Right cardiac atrium (tissue), 5 donors: ENCODE measurements at regions of chr6 and their contacts with region 1.

Region 1: DNA sequence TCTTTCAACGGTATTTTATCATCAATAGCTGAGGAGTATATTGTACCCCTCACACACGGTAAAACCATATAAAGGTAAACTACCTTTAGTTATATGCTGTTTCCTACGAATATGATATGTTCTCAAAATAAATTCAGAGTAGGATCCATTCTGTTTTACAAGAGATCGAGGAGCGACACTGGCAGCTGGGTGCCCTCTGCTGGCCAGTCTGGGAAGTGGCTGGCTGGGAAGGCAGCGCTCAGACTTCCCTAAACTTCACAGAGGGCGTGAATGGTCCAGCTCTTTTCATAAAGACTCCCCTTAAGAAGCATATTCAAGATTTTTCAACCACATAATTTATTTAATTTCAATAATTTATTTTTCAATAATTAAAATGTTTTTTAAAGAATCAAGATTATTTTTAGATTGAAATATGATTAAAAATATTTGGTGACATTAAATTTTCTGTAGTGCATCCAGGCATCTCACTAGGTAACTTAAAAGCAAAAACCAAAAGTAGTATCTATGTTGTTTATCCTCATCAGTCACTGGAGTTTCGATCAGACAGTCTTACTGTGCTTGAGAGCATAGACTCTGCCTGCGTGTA is 187.5 kb upstream of the PDE10A start:
- DNase-seq: peak; percentile 71 to 89 (median 88)
- ATAC-seq: peak in 1 of 2 donors; percentile 65
- H3K4me3 ChIP-seq: no peak overlapping the region
- H3K27ac ChIP-seq: no peak overlapping the region
- H3K4me1 ChIP-seq: peaks cover 2% of the 10 kb centered on the region
- H3K27me3 ChIP-seq: no peaks in the 10 kb centered on the region

Region 2: GRCh38 chr6:165447141-165447540 is 403.4 kb before region 1 on chr6:
- intact Hi-C with region 1: loop called (anchors 2 to 10 kb)
- DNase-seq: no peak
- ATAC-seq: no peak
- H3K4me3 ChIP-seq: no peak overlapping the region
- H3K27ac ChIP-seq: no peak overlapping the region
- H3K4me1 ChIP-seq: no peaks in the 10 kb centered on the region
- H3K27me3 ChIP-seq: no peaks in the 10 kb centered on the region

Region 3: GRCh38 chr6:165729307-165729936 is 121.1 kb before region 1 on chr6:
- intact Hi-C with region 1: loop called (anchors 5 to 10 kb)
- DNase-seq: no peak
- ATAC-seq: no peak
- H3K4me3 ChIP-seq: no peak overlapping the region
- H3K27ac ChIP-seq: no peak overlapping the region
- H3K4me1 ChIP-seq: no peaks in the 10 kb centered on the region
- H3K27me3 ChIP-seq: no peaks in the 10 kb centered on the region

Region 4: DNA sequence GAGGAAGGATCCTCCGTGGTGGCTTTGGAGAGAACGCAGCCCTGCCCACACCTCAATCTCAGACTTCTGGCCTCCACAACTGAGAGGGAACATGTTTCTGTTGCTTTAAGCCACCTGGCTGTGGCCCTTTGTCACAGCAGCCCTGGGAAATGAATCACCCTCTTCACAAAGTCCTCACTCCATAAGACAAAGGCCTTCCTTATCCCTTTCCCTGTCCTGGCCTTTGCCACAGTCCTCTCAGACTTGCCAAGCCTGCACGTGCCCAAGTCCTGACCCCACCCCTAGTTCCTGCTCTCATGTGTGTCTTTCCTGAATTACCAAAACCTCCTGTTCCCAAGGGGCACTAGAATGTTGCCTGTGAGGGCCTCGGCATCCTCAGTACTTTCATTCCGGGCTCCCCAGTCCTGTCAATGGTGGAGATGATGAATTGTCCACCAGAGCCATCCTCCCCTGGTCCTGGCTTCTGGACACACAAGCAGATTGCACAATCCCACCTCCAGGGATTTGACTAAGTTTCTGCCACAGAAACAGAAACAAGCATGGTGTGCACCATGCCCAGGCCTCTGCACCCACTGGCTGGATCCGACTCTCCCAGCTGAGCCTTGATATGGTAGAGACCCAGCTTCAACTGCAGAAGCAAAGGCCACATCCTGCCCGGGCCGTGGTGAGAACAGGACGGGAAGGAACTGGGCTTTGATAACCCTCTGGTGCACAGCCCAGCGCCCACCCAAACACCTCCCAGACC is 45.1 kb after region 1 on chr6:
- intact Hi-C with region 1: no loop called
- DNase-seq: peak in 1 of 3 donors; percentile 25
- ATAC-seq: peak in 1 of 2 donors; percentile 20
- H3K4me3 ChIP-seq: no peak overlapping the region
- H3K27ac ChIP-seq: no peak overlapping the region
- H3K4me1 ChIP-seq: no peaks in the 10 kb centered on the region
- H3K27me3 ChIP-seq: no peaks in the 10 kb centered on the region

Region 5: GRCh38 chr6:165961233-165961632 is 110.7 kb after region 1 on chr6:
- intact Hi-C with region 1: no loop called
- DNase-seq: no peak
- ATAC-seq: no peak
- H3K4me3 ChIP-seq: no peak overlapping the region
- H3K27ac ChIP-seq: no peak overlapping the region
- H3K4me1 ChIP-seq: no peaks in the 10 kb centered on the region
- H3K27me3 ChIP-seq: no peaks in the 10 kb centered on the region